ENCODE measurements at regions of chr4 and their contacts with region 1.

Region 1: DNA sequence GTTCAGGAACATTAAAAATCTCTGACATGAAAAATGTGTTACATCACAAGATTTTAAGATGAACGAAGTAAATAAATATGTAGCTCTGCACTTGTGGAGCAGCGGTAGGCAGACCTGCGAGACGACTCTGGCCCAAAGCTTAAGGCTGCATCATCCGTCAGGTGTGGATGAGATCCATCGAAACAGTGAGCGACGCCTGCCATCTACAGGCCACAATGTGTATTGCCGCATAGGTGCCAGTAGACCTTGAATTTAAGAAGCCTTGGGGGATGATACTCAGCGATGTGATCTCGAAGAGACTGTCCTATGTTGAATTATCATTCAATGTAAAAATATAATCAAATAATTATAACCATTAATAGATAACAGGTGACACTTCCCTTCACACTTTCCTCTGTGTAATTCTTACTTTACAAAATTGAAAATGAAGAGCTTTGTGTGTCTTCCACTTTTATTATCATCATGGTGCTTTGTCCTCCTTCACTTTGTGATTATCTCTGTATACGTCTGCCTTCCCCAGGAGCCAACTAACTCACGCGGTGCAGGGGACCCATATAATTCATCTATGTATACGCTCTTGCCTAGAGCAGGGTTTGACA is 851.0 kb downstream of the RAB28 start:
- DNase-seq: peak; percentile 79 to 81
- H3K4me3 ChIP-seq: no peak overlapping the region
- H3K4me3 Mint-ChIP-seq: no peak overlapping the region
- H3K27ac Mint-ChIP-seq: no peak overlapping the region
- H3K4me1 ChIP-seq: no peaks in the 10 kb centered on the region
- H3K4me1 Mint-ChIP-seq: no peaks in the 10 kb centered on the region
- H3K27me3 ChIP-seq: no peaks in the 10 kb centered on the region
- H3K27me3 Mint-ChIP-seq: no peaks in the 10 kb centered on the region
- CTCF ChIP-seq: peak; percentile 77 to 83

Region 2: GRCh38 chr4:11765849-11766453 is 867.2 kb before region 1 on chr4:
- CTCF ChIA-PET with region 1: interaction called, 3 read pairs
- POLR2A ChIA-PET with region 1: no interaction called
- intact Hi-C with region 1: loop called (anchors 1 kb)
- DNase-seq: peak in 1 of 2 experiments; percentile 24
- H3K4me3 ChIP-seq: no peak overlapping the region
- H3K4me3 Mint-ChIP-seq: no peak overlapping the region
- H3K27ac Mint-ChIP-seq: no peak overlapping the region
- H3K4me1 ChIP-seq: no peaks in the 10 kb centered on the region
- H3K4me1 Mint-ChIP-seq: no peaks in the 10 kb centered on the region
- H3K27me3 ChIP-seq: no peaks in the 10 kb centered on the region
- H3K27me3 Mint-ChIP-seq: peaks cover 3% of the 10 kb centered on the region
- CTCF ChIP-seq: peak; percentile 64 to 71

Region 3: DNA sequence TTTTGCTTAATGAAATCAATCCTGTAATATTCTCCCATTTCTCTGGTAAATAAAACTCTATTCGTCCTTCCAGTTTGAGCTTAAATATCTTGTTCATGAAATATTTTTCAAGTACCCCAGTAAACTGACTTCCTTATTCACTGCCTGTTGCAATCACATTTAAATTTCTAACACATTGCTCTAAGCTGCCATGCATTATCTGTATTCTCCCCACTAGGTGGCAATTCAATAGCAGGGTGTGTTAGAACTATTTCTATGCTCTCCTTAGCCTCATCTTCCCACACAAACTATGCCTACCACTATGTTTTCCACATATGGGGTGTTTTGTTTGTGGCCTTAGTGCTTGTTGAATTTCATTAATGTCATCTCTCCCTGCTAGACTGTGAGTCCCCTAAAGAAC is 827.3 kb before region 1 on chr4:
- CTCF ChIA-PET with region 1: no interaction called
- POLR2A ChIA-PET with region 1: no interaction called
- intact Hi-C with region 1: loop called (anchors 1 kb)
- DNase-seq: peak in 1 of 2 experiments; percentile 7
- H3K4me3 ChIP-seq: no peak overlapping the region
- H3K4me3 Mint-ChIP-seq: no peak overlapping the region
- H3K27ac Mint-ChIP-seq: no peak overlapping the region
- H3K4me1 ChIP-seq: peaks cover 5% of the 10 kb centered on the region; the same call in 1 of the 2 replicates
- H3K4me1 Mint-ChIP-seq: no peaks in the 10 kb centered on the region
- H3K27me3 ChIP-seq: no peaks in the 10 kb centered on the region
- H3K27me3 Mint-ChIP-seq: no peaks in the 10 kb centered on the region
- CTCF ChIP-seq: peak in 1 of 2 experiments; percentile 40

Region 4: DNA sequence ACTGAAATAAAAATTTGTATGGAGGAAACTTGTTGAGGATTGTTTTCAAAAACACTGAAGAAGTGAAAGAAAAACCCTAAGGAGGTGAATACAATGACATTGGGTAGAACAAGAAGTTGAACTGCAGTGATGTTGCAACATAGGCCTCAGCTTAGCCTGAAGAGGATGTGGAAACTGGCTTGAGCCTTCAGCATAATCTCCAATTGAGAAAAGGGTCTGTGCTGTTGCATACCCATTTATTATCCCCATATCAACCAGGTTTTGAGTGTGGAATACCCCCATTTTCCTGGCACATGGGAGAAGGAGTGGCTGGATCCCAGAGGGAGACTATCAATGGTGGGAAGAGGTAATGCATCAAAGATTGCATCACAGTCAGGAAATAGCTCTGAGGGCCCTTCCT is 509.4 kb before region 1 on chr4:
- CTCF ChIA-PET with region 1: no interaction called
- POLR2A ChIA-PET with region 1: no interaction called
- intact Hi-C with region 1: no loop called
- DNase-seq: no peak
- H3K4me3 ChIP-seq: no peak overlapping the region
- H3K4me3 Mint-ChIP-seq: no peak overlapping the region
- H3K27ac Mint-ChIP-seq: no peak overlapping the region
- H3K4me1 ChIP-seq: no peaks in the 10 kb centered on the region
- H3K4me1 Mint-ChIP-seq: no peaks in the 10 kb centered on the region
- H3K27me3 ChIP-seq: no peaks in the 10 kb centered on the region
- H3K27me3 Mint-ChIP-seq: no peaks in the 10 kb centered on the region
- CTCF ChIP-seq: no peak

Region 5: DNA sequence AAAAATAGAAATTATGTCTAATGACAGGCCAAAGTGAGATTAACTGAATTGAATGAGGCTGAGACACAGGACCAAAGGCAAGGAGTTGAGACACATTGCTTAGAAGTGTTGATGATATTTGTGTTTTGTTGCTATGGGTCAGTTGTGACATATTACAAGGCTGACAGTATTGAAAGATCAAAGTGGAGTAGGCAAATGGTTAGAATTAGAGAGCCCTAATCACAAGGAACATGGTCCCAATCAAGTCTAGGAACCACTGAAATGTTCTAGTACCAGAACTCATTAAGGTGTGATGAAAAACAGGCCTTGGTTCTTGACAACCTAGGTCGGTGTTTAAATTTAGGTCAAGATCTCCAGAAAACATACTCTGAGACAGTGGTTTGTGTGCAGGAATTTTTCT is 308.2 kb before region 1 on chr4:
- CTCF ChIA-PET with region 1: no interaction called
- POLR2A ChIA-PET with region 1: no interaction called
- intact Hi-C with region 1: loop called (anchors 2 kb)
- DNase-seq: no peak
- H3K4me3 ChIP-seq: no peak overlapping the region
- H3K4me3 Mint-ChIP-seq: no peak overlapping the region
- H3K27ac Mint-ChIP-seq: no peak overlapping the region
- H3K4me1 ChIP-seq: no peaks in the 10 kb centered on the region
- H3K4me1 Mint-ChIP-seq: no peaks in the 10 kb centered on the region
- H3K27me3 ChIP-seq: no peaks in the 10 kb centered on the region
- H3K27me3 Mint-ChIP-seq: no peaks in the 10 kb centered on the region
- CTCF ChIP-seq: no peak

Region 6: GRCh38 chr4:12375805-12376204 is 257.3 kb before region 1 on chr4:
- CTCF ChIA-PET with region 1: no interaction called
- POLR2A ChIA-PET with region 1: no interaction called
- intact Hi-C with region 1: loop called (anchors 1 kb)
- DNase-seq: no peak
- H3K4me3 ChIP-seq: no peak overlapping the region
- H3K4me3 Mint-ChIP-seq: no peak overlapping the region
- H3K27ac Mint-ChIP-seq: no peak overlapping the region
- H3K4me1 ChIP-seq: no peaks in the 10 kb centered on the region
- H3K4me1 Mint-ChIP-seq: no peaks in the 10 kb centered on the region
- H3K27me3 ChIP-seq: no peaks in the 10 kb centered on the region
- H3K27me3 Mint-ChIP-seq: no peaks in the 10 kb centered on the region
- CTCF ChIP-seq: no peak

Region 7: DNA sequence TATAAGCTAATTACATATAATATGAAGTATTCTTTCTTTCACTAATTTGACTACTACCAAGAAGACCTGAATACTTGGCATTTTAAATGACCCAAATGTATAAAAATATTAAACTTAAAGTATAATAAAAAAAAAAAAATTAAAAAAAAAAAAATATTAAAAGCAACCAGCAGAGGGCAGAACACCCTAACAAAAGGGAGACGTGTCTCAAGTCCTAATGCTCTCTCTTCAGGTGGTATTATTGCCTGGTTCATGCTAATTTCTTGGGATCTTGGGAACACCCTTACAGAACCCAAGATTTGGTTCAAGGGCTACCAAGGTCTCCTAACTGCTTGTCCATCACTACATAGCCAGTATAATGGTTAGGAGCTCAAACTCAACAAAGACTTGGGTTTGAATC is 96.2 kb after region 1 on chr4:
- CTCF ChIA-PET with region 1: no interaction called
- POLR2A ChIA-PET with region 1: no interaction called
- intact Hi-C with region 1: loop called (anchors 1 kb)
- DNase-seq: no peak
- H3K4me3 ChIP-seq: no peak overlapping the region
- H3K4me3 Mint-ChIP-seq: no peak overlapping the region
- H3K27ac Mint-ChIP-seq: no peak overlapping the region
- H3K4me1 ChIP-seq: 0 out of 2 replicates have a peak, but pooled peaks cover 2% of the 10 kb centered on the region
- H3K4me1 Mint-ChIP-seq: no peaks in the 10 kb centered on the region
- H3K27me3 ChIP-seq: no peaks in the 10 kb centered on the region
- H3K27me3 Mint-ChIP-seq: peaks cover 16% of the 10 kb centered on the region
- CTCF ChIP-seq: peak in 1 of 2 experiments; percentile 24

Region 8: DNA sequence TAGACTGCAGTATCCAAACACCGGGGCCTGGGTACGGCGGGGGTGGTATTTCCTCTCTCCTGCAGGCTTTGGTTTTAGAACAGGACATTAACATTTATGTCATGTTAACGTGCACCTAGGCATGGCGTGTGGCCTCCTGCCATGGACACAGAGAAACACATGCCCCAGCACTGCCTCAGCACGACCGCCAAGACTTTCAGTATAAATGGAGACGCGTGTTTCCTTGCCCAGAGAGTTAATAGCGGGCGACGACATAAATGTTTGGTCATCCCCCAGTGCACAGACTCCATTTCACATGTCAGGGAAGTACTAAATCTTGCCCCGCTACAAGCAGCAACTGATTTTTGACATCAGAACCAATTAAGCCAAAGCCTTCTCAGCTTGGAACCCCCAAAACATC is 113.1 kb after region 1 on chr4:
- CTCF ChIA-PET with region 1: no interaction called
- POLR2A ChIA-PET with region 1: no interaction called
- intact Hi-C with region 1: no loop called
- DNase-seq: no peak
- H3K4me3 ChIP-seq: no peak overlapping the region
- H3K4me3 Mint-ChIP-seq: no peak overlapping the region
- H3K27ac Mint-ChIP-seq: no peak overlapping the region
- H3K4me1 ChIP-seq: no peaks in the 10 kb centered on the region
- H3K4me1 Mint-ChIP-seq: no peaks in the 10 kb centered on the region
- H3K27me3 ChIP-seq: no peaks in the 10 kb centered on the region
- H3K27me3 Mint-ChIP-seq: peaks cover 2% of the 10 kb centered on the region
- CTCF ChIP-seq: no peak